CD4-positive, alpha-beta memory T cell (primary cell): ENCODE measurements at regions of chr11 and their contacts with region 1.

Region 1: DNA sequence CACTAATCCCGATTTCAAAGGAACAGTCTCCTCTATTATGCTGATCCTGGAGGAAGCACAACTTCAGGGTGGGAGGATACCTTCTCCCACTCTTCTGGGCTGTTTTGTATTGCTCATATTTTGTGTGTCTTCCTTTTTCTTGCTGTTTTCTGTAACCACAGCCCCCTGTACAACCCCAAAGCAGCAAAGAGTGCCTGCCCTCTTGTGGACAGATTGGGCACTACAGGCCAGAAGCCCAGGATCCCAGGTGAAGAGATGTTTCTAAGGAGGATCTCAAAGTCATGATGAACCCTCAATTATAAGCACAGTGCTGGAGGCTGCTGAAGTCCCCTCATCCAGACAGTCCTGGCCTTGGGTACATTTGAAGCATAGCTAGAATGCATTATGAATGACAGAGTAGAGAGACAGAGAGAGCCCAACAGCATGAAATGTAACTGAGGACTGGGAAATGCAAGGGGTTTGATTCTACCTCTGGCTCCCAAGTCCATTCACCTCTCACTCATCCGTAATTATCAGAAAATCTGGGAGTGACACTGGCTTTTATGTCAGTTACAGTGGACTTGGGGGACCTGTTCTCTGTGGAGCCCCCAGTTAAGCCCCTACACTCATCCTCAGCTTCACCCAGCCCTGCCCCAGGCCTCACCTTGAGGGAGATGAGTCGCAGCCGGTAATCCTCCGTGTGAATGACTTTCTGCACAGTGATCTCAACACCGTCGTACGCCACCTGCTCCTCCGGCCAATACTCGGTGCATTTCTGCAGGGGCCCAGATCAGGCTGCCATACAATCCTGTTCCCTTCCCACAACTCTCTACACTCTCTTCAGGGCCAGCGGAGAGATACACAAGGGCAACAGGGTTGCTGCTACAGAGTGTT is 6.2 kb upstream of the IGSF22 start:
- DNase-seq: peak; percentile 54 to 66 (median 60)
- H3K4me3 ChIP-seq: no peak overlapping the region
- H3K4me3 Mint-ChIP-seq: no peak overlapping the region
- H3K27ac ChIP-seq: no peak overlapping the region
- H3K27ac Mint-ChIP-seq: peak overlapping the region in 4 of 7 donors; percentile 4 to 76 (median 50)
- H3K4me1 ChIP-seq: peaks cover 6% of the 10 kb centered on the region
- H3K4me1 Mint-ChIP-seq: peaks cover 4 to 15% (median 11%) of the 10 kb centered on the region in 4 donors
- H3K27me3 ChIP-seq: no peaks in the 10 kb centered on the region
- H3K27me3 Mint-ChIP-seq: no peaks in the 10 kb centered on the region

Region 2: GRCh38 chr11:18115360-18116127 is 616.6 kb before region 1 on chr11:
- CTCF ChIA-PET with region 1: interaction called, 22 read pairs
- POLR2A ChIA-PET with region 1: no interaction called
- intact Hi-C with region 1: loop called (anchors 1 kb)
- DNase-seq: peak; percentile 60 to 67 (median 63)
- H3K4me3 ChIP-seq: no peak overlapping the region
- H3K4me3 Mint-ChIP-seq: peak overlapping the region in 1 of 8 donors; percentile 7
- H3K27ac ChIP-seq: no peak overlapping the region
- H3K27ac Mint-ChIP-seq: peak overlapping the region in 2 of 7 donors; percentile 10 to 70
- H3K4me1 ChIP-seq: no peaks in the 10 kb centered on the region
- H3K4me1 Mint-ChIP-seq: peaks cover 4 to 7% (median 5%) of the 10 kb centered on the region in 4 donors
- H3K27me3 ChIP-seq: no peaks in the 10 kb centered on the region
- H3K27me3 Mint-ChIP-seq: peaks cover 10 to 23% of the 10 kb centered on the region in 2 donors

Region 3: GRCh38 chr11:18540207-18541009 is 191.8 kb before region 1 on chr11:
- CTCF ChIA-PET with region 1: interaction called, 138 read pairs
- POLR2A ChIA-PET with region 1: interaction called, 3 read pairs
- intact Hi-C with region 1: loop called (anchors 1 kb)
- DNase-seq: peak in 4 of 5 donors; percentile 46 to 58 (median 54)
- H3K4me3 ChIP-seq: no peak overlapping the region
- H3K4me3 Mint-ChIP-seq: no peak overlapping the region
- H3K27ac ChIP-seq: no peak overlapping the region
- H3K27ac Mint-ChIP-seq: peak overlapping the region in 5 of 7 donors; percentile 25 to 81 (median 33)
- H3K4me1 ChIP-seq: no peaks in the 10 kb centered on the region
- H3K4me1 Mint-ChIP-seq: peaks cover 0 to 7% (median 0%) of the 10 kb centered on the region in 4 donors
- H3K27me3 ChIP-seq: no peaks in the 10 kb centered on the region
- H3K27me3 Mint-ChIP-seq: no peaks in the 10 kb centered on the region

Region 4: GRCh38 chr11:18578975-18579598 is 153.1 kb before region 1 on chr11:
- CTCF ChIA-PET with region 1: interaction called, 13 read pairs
- POLR2A ChIA-PET with region 1: no interaction called
- intact Hi-C with region 1: no loop called
- DNase-seq: peak in 3 of 5 donors; percentile 22 to 54 (median 27)
- H3K4me3 ChIP-seq: peak overlapping the region in 1 of 2 donors; percentile 33
- H3K4me3 Mint-ChIP-seq: peak overlapping the region; percentile 66 to 88 (median 81)
- H3K27ac ChIP-seq: no peak overlapping the region
- H3K27ac Mint-ChIP-seq: peak overlapping the region; percentile 82 to 94 (median 89)
- H3K4me1 ChIP-seq: peaks cover 23% of the 10 kb centered on the region
- H3K4me1 Mint-ChIP-seq: peaks cover 17 to 38% (median 25%) of the 10 kb centered on the region in 4 donors
- H3K27me3 ChIP-seq: no peaks in the 10 kb centered on the region
- H3K27me3 Mint-ChIP-seq: no peaks in the 10 kb centered on the region

Region 5: DNA sequence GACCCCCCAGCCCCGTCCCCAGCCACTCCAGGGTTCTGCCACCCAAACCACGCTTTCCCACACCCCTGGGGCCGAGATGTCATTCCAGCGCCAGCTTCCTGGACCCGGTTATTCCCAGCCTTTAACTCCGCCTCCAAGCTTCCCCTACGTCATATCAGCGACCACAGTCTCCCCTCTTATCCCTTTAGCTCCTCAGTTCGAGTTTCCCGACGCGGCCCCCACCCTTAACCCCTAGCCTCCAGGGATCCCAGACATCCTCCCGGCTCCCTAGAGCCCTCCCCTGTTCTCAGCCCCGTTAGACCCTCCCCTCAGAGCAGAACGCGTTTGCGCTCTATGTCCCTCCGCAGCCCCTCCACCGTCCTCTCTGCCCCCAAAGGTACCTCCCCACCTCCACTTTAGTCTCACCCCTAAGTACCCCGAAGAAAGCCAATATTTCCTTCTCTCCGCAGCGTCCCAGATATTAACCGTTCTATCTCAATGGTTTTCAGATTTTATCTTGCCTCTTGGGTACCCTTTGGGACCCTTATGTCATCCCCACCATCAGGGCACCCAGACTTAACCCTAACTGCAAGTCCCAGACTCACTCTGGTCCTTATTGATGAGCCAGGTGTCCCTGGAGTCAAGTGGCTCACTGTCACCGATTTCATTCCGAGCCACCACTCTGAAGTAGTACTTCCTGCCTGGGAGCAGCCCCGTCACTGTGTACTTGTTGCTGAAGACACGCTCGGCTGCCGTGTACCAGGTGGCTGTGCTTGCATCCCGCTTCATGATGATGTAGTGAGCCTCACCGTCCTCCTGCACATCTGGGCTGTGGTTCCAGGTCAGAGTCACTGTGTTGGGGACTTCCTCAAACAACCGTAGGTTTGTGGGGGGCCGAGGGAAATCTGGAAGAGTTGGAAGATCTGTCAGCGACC is 25.6 kb before region 1 on chr11:
- CTCF ChIA-PET with region 1: interaction called, 10 read pairs
- POLR2A ChIA-PET with region 1: no interaction called
- intact Hi-C with region 1: no loop called
- DNase-seq: peak; percentile 50 to 77 (median 61)
- H3K4me3 ChIP-seq: peak overlapping the region; percentile 53 to 60
- H3K4me3 Mint-ChIP-seq: peak overlapping the region; percentile 91 to 97 (median 95)
- H3K27ac ChIP-seq: peak overlapping the region; percentile 52
- H3K27ac Mint-ChIP-seq: peak overlapping the region; percentile 78 to 98 (median 96)
- H3K4me1 ChIP-seq: peaks cover 13% of the 10 kb centered on the region
- H3K4me1 Mint-ChIP-seq: peaks cover 13 to 30% (median 21%) of the 10 kb centered on the region in 4 donors
- H3K27me3 ChIP-seq: no peaks in the 10 kb centered on the region
- H3K27me3 Mint-ChIP-seq: no peaks in the 10 kb centered on the region

Region 6: GRCh38 chr11:18721561-18722292 is 10.5 kb before region 1 on chr11:
- CTCF ChIA-PET with region 1: interaction called, 59 read pairs
- POLR2A ChIA-PET with region 1: interaction called, 5 read pairs
- intact Hi-C with region 1: no loop called
- DNase-seq: peak; percentile 36 to 60 (median 53)
- H3K4me3 ChIP-seq: peak overlapping the region; percentile 77 to 81
- H3K4me3 Mint-ChIP-seq: peak overlapping the region; percentile 87 to 96 (median 92)
- H3K27ac ChIP-seq: peak overlapping the region; percentile 56
- H3K27ac Mint-ChIP-seq: peak overlapping the region; percentile 47 to 92 (median 81)
- H3K4me1 ChIP-seq: peaks cover 5% of the 10 kb centered on the region
- H3K4me1 Mint-ChIP-seq: peaks cover 4 to 13% (median 7%) of the 10 kb centered on the region in 4 donors
- H3K27me3 ChIP-seq: no peaks in the 10 kb centered on the region
- H3K27me3 Mint-ChIP-seq: no peaks in the 10 kb centered on the region